Activated T-helper 1 cell treated with anti-CD3 and anti-CD28 coated beads, Interleukin-12 subunit alpha, Interleukin-12 subunit beta, Interleukin-2, Interleukin-4 antibody, amounts not matched to agents 30 ng/mL and 10 ng/mL and 1 ng/mL, durations not matched to agents 14 hours and 24 hours and 36 hours (primary cell): ENCODE measurements at regions of chr2 and their contacts with region 1.

Region 1: DNA sequence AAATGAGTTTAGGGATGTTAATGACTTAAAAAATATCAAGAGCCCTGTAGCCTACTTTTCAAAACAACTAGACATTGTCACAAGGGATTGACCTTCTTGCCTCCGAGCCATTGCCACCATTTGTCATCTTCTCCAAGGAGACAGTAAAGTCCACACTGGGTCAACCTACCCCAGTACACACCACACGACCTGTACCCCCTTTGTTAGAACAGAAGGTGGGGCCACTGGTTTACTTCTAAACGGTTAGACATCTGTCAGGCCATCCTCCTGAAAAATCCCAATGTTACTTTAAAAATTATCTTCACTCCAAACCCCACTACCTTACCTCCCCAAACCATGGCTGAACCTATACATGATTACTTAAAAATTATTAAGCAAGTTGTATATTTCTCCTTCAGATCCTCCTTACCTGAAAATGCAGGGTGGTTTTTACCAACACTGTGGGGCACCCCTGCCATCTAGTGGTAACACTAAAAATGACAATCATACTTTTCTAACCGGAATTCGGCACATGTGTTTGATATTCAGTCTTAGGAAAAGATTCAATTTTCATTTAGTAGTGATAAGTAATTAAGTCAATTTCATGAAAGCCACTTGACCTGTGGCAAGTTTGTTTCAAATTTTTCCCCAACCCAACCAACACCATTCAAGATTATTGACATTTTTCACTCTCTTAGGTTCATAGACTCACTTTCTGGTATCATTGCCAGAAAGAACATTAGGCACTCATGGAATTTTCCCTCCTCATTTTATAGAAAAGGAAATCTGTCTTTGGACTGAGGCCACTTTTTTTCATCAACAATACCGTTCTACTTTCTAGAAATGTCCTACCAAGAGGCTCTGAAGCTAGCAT is 265.3 kb upstream of the PKDCC start:
- DNase-seq: peak; percentile 4
- H3K4me3 Mint-ChIP-seq: no peak overlapping the region
- H3K27ac Mint-ChIP-seq: no peak overlapping the region
- H3K4me1 Mint-ChIP-seq: no peaks in the 10 kb centered on the region
- H3K27me3 Mint-ChIP-seq: peaks cover 13% of the 10 kb centered on the region

Region 2: DNA sequence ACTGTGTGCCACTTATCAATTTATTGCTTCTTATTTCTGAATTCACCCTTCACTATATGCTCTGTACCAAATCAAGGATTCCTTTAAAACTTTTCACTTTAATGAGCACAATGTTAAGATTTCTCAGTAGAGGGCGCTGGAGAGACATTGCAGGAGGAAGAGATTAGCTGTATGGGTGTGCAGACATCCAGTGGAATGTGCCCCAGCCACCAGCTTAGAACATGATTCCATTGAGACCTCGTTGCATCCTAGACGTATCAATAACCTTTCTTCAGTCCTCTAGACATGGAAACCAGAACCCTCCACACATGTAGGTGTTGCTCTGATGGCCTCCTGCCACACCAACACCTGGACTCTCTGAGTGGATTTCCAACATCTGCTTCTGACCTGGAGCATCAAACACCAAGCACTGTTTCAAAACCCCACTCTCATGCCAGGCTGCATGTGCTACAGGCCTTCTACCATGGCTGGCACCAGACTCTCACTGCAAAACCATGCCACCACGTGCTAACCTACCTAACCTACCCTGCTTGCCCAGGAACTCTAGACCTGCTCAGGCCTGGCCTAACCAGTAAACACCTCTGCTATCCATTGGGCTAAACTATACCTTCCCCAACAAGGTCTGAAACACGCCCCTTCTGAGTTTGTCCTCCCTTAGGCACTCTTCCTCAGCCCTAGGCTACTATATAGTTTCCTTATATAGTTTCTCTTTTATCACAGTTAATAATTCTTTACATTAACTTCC is 367.9 kb before region 1 on chr2:
- intact Hi-C with region 1: loop called (anchors 1 kb)
- DNase-seq: no peak
- H3K4me3 Mint-ChIP-seq: no peak overlapping the region
- H3K27ac Mint-ChIP-seq: no peak overlapping the region
- H3K4me1 Mint-ChIP-seq: no peaks in the 10 kb centered on the region
- H3K27me3 Mint-ChIP-seq: no peaks in the 10 kb centered on the region

Region 3: GRCh38 chr2:41668529-41668928 is 114.0 kb before region 1 on chr2:
- intact Hi-C with region 1: no loop called
- DNase-seq: no peak
- H3K4me3 Mint-ChIP-seq: no peak overlapping the region
- H3K27ac Mint-ChIP-seq: no peak overlapping the region
- H3K4me1 Mint-ChIP-seq: no peaks in the 10 kb centered on the region
- H3K27me3 Mint-ChIP-seq: no peaks in the 10 kb centered on the region

Region 4: DNA sequence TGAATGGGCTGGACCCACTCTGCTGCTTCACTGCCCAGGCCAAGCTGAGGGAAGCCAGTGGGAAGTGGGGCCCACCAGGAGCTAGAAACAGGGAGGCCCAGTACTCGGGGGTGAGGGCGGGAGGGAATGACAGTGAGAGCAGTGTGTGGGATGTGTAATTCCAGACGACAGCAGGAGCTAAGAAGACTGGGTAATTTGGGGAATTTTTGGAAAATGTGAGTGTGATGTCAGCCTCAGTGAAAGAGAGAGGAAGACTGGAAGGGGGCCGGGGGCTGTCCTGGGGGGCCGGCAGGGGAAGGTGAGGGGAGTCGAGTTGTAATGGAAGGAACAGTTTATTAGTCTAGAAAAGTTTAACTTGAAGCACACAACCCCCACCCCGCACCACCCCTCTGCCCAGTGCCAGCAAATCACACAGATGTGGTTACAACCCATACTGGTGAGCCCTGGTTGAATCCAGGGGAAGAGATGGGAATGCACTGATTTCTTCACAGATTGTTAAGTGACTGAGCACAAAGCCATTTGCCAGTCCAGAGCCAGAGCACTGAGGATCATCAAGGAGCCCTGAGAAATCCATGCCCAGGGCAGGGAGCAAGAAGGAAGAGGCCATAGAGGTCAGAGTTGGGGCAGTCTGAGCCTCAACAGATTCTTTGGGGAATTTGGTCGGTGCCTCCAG is 188.6 kb after region 1 on chr2:
- intact Hi-C with region 1: no loop called
- DNase-seq: no peak
- H3K4me3 Mint-ChIP-seq: no peak overlapping the region
- H3K27ac Mint-ChIP-seq: no peak overlapping the region
- H3K4me1 Mint-ChIP-seq: no peaks in the 10 kb centered on the region
- H3K27me3 Mint-ChIP-seq: peaks cover 3% of the 10 kb centered on the region